Gastrocnemius medialis (tissue), 4 donors: ENCODE measurements at regions of chr13 and their contacts with region 1.

Region 1: DNA sequence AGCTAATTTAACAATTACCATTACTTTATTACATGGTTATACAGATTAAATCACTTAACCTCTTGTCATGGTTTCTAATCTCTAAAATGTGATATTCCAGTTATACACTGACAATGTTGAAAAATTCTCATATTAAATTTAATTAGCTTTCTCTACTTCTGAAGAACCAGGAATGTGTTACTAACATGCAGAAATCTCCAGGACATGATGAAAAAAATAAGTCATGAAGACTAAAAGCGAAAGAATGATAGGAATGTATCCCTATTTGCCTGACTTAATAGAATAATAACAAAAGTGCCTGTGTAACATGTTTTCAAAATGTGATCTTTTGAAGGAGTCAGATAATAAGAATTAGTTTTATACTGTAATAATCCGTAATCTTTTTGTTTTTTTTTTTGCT is 2823.7 kb upstream of the PCDH20 start:
- DNase-seq: no peak
- ATAC-seq: no peak
- H3K4me3 ChIP-seq: no peak overlapping the region
- H3K27ac ChIP-seq: no peak overlapping the region
- H3K4me1 ChIP-seq: no peaks in the 10 kb centered on the region
- H3K27me3 ChIP-seq: no peaks in the 10 kb centered on the region
- CTCF ChIP-seq: no peak
- POLR2A ChIP-seq: no peak

Region 2: GRCh38 chr13:64332048-64332447 is 92.7 kb after region 1 on chr13:
- in situ Hi-C with region 1: loop called in 1 of 4 experiments (anchors 25 kb)
- intact Hi-C with region 1: no loop called
- DNase-seq: no peak
- ATAC-seq: no peak
- H3K4me3 ChIP-seq: no peak overlapping the region
- H3K27ac ChIP-seq: no peak overlapping the region
- H3K4me1 ChIP-seq: no peaks in the 10 kb centered on the region
- H3K27me3 ChIP-seq: no peaks in the 10 kb centered on the region
- CTCF ChIP-seq: no peak
- POLR2A ChIP-seq: no peak